ENCODE measurements at regions of chr10 and their contacts with region 1.

Region 1: GRCh38 chr10:81135851-81136250 is 598.1 kb downstream of the SH2D4B start:
- DNase-seq: no peak
- H3K4me3 ChIP-seq: no peak overlapping the region
- H3K27ac ChIP-seq: no peak overlapping the region
- H3K4me1 ChIP-seq: no peaks in the 10 kb centered on the region
- H3K27me3 ChIP-seq: no peaks in the 10 kb centered on the region
- CTCF ChIP-seq: no peak
- EP300 ChIP-seq: no peak
- POLR2A ChIP-seq: no peak

Region 2: DNA sequence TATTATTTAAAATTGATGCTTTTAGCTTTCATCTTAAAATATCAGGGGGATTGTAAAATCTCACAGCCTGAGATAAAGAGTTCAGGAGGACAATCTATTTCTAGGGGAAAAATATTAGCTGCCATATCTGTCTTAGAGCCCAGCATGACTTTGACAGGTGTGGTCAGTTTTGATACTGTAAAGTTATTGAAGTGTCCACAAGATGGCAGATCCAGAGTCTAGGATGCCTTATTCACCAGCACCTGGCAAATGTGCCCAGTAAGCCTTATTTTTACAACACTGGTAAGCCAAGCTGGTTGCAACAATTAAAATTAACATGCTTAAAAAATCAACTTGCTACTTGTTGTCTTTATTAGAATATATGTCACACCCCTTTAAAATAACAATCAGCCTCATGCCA is 18.9 kb before region 1 on chr10:
- intact Hi-C with region 1: loop called (anchors 2 kb)
- DNase-seq: no peak
- H3K4me3 ChIP-seq: no peak overlapping the region
- H3K27ac ChIP-seq: no peak overlapping the region
- H3K4me1 ChIP-seq: no peaks in the 10 kb centered on the region
- H3K27me3 ChIP-seq: no peaks in the 10 kb centered on the region
- CTCF ChIP-seq: no peak
- EP300 ChIP-seq: no peak
- POLR2A ChIP-seq: no peak

Measured in sigmoid colon (tissue), 7 donors.